Tibial artery (tissue), 4 donors: ENCODE measurements at regions of chr2 and their contacts with region 1.

Region 1: GRCh38 chr2:239225871-239226561 is 174.8 kb downstream of the HDAC4 start:
- DNase-seq: peak; percentile 51 to 62
- H3K4me3 ChIP-seq: no peak overlapping the region
- H3K27ac ChIP-seq: peak overlapping the region; percentile 81 to 89
- H3K4me1 ChIP-seq: peaks cover 0 to 67% (median 60%) of the 10 kb centered on the region in 4 donors
- H3K27me3 ChIP-seq: no peaks in the 10 kb centered on the region
- CTCF ChIP-seq: no peak

Region 2: DNA sequence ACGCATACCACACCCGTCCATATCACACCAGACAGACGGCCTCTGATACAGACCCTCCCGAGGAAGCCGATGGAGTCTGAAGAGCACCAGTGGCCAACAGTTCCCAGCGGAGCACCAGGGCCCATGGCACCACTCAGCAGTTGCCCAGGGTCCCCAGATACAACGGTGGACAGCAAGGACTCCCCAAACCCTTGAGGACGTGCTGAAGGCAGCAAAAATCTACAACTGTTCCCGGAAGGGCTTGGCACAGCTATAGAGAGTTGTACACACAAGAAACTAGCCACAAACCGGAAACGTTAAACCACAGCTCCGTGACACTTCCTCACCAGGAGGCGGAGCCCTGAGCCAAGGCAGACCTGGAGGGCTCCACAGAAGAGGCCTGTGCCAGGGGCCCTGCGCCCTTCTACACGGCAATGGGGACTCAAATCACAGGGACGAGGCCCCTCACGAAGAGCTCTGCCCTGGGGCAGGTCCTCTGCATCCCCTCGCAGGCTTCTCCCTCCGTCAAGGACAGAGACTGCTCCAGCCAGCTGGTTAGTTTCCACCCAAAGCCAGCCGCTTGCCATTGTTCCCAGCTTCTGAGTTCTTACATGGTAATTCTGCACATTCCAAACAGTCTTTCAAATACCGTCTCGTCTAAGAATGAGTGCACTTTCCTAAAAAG is 41.4 kb after region 1 on chr2:
- intact Hi-C with region 1: loop called (anchors 5 kb)
- DNase-seq: peak; percentile 82
- H3K4me3 ChIP-seq: no peak overlapping the region
- H3K27ac ChIP-seq: peak overlapping the region; percentile 72 to 78
- H3K4me1 ChIP-seq: peaks cover 0 to 63% (median 50%) of the 10 kb centered on the region in 4 donors
- H3K27me3 ChIP-seq: no peaks in the 10 kb centered on the region
- CTCF ChIP-seq: peak in 1 of 2 experiments; percentile 5